Activated B cell treated with CpG ODN at 0.5 μM for 24 hours (primary cell): ENCODE measurements at regions of chr13 and their contacts with region 1.

Region 1: DNA sequence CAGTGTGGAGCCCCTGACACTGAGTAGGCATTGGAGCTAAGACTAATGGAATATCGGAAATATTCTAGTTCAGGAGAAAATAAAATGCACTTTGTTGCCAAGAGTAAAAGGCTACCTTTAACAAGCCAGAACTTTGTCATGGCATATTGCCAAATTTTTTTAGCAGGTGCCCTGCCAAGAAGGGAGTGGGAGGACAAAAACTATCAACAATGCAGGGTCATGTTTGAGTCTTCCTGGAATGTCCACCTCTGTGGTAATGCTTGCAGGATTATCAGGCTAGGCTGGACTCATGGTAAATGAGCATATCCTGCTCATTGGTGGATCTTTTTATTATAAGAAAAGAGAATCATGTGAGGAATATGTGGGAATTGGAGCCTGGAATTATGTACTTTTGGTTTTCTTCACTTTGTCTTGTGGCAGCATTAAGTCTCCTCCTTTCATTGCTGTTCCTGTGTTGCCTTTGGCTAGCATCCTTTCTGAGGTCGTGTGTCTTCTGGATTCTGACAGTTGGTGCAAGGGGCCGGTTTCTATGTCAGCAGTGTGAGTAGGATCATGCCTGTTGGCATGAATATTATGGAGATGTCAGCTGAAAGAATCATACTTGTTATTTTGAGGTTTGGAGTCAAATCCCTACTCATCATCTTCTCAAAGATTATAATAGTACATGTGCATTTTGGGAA is 122.9 kb upstream of the SPRY2 start:
- DNase-seq: no peak
- ATAC-seq: no peak
- H3K4me3 Mint-ChIP-seq: no peak overlapping the region
- H3K27ac Mint-ChIP-seq: no peak overlapping the region
- H3K4me1 Mint-ChIP-seq: peaks cover 3% of the 10 kb centered on the region
- H3K27me3 Mint-ChIP-seq: no peaks in the 10 kb centered on the region
- CTCF ChIP-seq: no peak

Region 2: DNA sequence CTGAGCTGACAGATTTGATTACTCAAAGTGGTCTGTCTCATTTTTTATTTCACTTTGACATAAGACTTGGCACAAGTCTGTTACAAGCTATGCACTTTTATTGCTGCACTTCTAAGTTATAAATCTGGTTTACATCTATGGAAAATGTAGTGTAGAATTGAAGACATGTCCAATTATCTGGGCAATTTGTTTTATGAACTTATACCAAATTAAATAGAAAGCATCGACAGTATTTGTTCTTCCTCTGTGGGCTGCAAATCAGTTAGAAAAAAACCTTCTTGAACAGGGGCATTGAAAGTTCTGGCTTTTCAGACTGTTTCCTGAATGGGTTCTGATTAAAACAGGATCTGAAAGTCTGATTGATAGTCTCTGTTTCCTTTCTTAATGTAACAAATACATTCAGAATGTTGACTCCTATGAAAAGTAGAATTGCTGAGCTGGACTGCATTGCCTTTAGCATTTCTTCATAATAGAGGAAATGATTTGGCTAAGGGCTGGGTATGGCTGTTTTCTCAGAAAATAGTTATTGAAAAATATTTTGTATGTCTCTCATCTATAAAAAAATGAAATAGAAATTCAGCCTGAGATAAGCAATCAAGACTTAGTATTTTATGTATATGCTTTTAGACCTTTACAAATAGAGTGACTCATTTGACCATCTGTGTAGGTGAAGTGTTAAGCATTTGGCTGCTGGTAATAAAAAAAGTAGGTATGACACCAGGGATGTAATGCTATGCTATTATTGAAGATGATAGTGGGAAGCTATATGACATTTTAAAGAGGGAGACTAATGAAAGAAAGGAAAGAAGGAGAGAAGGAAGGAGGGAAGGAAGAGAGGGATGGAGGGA is 88.1 kb after region 1 on chr13:
- CTCF ChIA-PET with region 1: no interaction called
- POLR2A ChIA-PET with region 1: interaction called, 3 read pairs
- intact Hi-C with region 1: loop called (anchors 5 kb)
- DNase-seq: no peak
- ATAC-seq: peak; percentile 31
- H3K4me3 Mint-ChIP-seq: peak overlapping the region; percentile 16
- H3K27ac Mint-ChIP-seq: no peak overlapping the region
- H3K4me1 Mint-ChIP-seq: peaks cover 9% of the 10 kb centered on the region
- H3K27me3 Mint-ChIP-seq: no peaks in the 10 kb centered on the region
- CTCF ChIP-seq: no peak